Left cardiac atrium (tissue), 4 donors: ENCODE measurements at regions of chr9 and their contacts with region 1.

Region 1: DNA sequence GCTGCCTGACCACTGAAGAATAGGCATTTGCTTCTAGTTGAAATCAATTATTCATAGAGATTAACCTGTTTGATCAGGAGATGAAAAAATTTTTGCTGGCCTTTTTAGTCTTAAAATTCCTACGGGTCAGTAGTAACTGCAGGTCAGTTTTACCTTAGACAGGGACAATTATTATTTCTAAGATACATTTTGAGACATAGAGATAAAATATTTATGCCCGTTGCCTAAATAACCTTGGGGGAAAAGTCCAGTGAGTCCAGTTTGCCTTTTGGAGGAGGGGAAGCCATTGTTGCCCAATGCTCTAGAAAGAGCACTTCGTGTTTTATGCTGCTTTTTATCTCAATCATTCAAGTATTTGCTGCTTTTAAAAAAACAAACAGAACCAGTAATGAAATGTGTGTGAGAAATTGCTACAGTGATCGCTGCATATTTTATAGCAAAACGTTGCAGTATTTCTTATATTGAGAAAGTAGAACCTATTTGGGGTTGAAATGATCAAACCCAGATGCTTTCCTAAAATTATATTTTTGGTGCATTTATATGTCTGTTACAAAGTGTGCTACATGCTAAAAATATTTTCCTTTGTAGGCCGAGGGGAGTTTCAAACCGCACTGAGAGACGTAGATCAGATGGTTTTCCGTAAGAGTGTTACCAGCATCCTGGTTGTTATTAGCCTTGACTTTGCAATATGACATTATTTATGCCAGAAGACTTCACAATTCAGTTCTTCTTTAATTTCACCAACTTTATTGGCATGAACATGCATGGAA is 266.8 kb downstream of the AOPEP start:
- DNase-seq: no peak
- ATAC-seq: no peak

Region 2: GRCh38 chr9:94973451-94973941 is 19.8 kb before region 1 on chr9:
- intact Hi-C with region 1: loop called in 1 of 2 experiments (anchors 2 kb)
- DNase-seq: no peak
- ATAC-seq: peak; percentile 40 to 53

Region 3: DNA sequence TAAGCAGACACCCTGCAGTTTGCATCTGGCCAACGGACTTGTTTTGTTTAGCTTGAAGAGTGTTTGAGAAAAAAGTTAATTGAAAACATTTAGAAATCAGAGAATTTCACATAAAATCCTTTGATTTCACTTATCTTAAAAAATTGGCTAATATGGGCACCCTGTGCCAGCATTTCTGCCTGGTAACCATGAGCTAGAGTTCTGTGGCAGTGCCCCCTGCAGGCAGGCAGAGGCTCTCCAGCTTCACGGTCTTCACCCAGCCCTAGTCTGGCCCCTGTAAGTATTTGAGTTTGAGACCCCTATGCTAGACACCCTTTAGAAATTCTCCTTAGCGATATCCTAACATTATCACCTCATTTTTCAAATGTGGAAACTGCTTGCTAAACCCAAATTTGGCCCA is 343.0 kb after region 1 on chr9:
- intact Hi-C with region 1: no loop called
- DNase-seq: no peak
- ATAC-seq: peak in 1 of 2 donors; percentile 30